Heart right ventricle (tissue), 16 donors: ENCODE measurements at regions of chr3 and their contacts with region 1.

Region 1: GRCh38 chr3:149990423-149990948 is 19.8 kb upstream of the PFN2 start:
- DNase-seq: no peak
- ATAC-seq: no peak
- H3K4me3 ChIP-seq: no peak overlapping the region
- H3K27ac ChIP-seq: no peak overlapping the region
- H3K4me1 ChIP-seq: peaks cover 0 to 5% (median 0%) of the 10 kb centered on the region in 9 donors
- H3K27me3 ChIP-seq: no peaks in the 10 kb centered on the region
- CTCF ChIP-seq: no peak

Region 2: GRCh38 chr3:148902031-148902791 is 1088.3 kb before region 1 on chr3:
- intact Hi-C with region 1: no loop called
- DNase-seq: no peak
- ATAC-seq: no peak
- H3K4me3 ChIP-seq: no peak overlapping the region
- H3K27ac ChIP-seq: no peak overlapping the region
- H3K4me1 ChIP-seq: no peaks in the 10 kb centered on the region
- H3K27me3 ChIP-seq: peaks cover 0 to 13% (median 0%) of the 10 kb centered on the region in 7 donors
- CTCF ChIP-seq: no peak

Region 3: DNA sequence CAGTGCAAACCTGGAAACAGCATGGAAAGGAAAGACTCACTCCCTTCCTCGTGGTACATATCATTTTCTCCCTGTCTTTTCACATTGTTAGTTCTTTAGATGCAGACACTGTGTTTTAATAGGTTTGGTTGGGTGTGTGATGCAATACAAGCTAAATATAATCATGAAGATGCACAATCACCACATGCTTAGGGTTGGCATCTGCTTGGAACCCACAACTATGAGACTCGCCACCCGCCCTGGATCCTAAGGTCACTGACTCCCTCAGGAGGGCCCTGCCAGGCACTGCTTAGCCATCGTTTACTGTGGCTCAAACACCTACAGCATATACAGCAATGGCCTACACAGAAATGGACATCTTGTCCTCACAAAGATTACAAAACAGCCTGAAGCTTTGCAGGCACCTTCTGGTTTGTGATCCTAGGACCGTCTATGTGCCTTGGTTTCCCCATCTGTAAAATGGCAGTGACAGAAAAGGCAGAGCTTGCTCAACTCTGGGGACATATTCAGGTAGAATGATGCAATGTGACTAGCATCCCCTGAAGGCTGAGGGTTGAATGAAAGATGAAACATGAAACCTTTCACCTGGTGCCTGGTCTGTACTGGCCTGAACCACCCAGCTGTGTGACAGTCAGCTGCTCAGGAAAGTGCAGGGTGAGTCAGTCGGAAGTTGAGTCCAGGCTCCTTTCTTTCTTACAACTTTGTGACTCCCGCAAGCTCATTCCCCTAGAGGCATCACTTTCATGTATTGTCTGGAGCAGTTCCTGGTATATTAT is 103.9 kb after region 1 on chr3:
- intact Hi-C with region 1: loop called in 1 of 10 experiments (anchors 10 kb)
- DNase-seq: no peak
- ATAC-seq: no peak
- H3K4me3 ChIP-seq: no peak overlapping the region
- H3K27ac ChIP-seq: no peak overlapping the region
- H3K4me1 ChIP-seq: no peaks in the 10 kb centered on the region
- H3K27me3 ChIP-seq: no peaks in the 10 kb centered on the region
- CTCF ChIP-seq: no peak